Thyroid gland (tissue), 4 donors: ENCODE measurements at regions of chr13 and their contacts with region 1.

Region 1: DNA sequence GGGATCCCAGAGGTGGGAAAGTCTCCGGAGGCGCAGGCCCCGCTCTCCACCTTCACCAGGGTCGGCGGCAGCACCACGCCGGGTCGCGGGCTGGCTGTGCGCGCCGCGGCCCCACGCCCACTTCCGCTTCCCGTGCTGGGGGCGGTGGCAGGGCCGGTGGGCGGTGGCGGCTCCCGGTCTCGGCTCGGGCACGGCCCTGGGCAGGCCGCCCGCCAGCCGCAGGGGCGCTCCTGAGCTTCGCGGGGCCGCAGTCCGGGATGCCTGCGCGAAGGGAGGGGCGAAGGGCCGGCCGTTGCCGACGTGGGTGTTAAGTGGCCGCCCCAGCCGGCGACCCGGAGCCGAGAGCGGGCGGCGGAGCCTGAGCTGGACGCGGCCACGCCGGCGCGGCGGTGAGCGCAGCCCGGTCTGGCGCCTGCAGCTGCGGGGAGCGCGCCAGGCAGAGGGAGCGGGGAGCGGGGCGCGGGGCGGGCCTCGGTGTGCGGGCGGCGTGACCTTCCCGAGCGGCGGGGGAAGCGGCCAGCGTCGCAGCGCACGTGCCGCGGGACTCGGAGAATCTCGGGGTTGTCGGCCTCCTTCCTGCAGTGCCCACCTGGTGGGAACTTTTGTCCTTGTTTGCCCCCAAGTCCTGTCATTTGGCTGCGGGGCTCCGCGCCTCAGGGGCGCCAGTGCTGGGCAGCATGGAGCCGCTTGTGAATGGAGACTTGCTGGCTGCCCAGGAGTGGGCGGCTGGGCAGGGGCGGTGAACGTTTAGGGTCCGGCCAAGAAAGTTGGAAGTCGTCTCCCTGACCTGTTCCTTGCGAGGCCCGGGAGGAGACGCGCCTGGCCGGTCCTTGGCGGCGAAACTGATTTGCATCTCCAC is at the start of gene SLC25A15:
- DNase-seq: peak; percentile 91 to 93
- H3K4me3 ChIP-seq: peak within 1 kb of the TSS; percentile 10 to 74 (median 46)
- H3K27ac ChIP-seq: peak within 1 kb of the TSS; percentile 81 to 93 (median 91)
- H3K4me1 ChIP-seq: peaks cover 35 to 39% of the 10 kb centered on the region in 2 donors
- H3K27me3 ChIP-seq: no peaks in the 10 kb centered on the region
- CTCF ChIP-seq: peak in 3 of 6 experiments; percentile 58 to 62 (median 59)
- POLR2A ChIP-seq: peak in 1 of 2 donors; percentile 92
- total RNA-seq, gene SLC25A15: 12.8 to 19.5 (median 13.6) TPM

Region 2: DNA sequence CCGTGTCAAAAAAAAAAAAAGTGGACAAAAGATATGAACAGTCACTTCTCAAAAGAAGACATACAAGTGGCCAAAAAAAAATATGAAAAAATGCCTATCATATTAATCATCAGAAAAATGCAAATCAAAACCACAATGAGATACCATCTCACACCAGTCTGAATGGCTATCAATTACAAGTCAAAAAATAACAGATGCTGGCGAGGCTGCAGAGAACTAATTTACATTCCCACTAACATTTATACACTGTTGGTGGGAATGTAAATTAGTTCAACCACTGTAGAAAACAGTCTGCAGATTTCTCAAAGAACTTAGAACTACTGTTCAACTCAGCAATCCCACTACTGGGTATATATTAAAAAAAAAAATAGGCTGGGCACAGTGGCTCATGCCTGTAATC is 96.6 kb before region 1 on chr13:
- intact Hi-C with region 1: no loop called
- DNase-seq: no peak
- H3K4me3 ChIP-seq: no peak overlapping the region
- H3K27ac ChIP-seq: no peak overlapping the region
- H3K4me1 ChIP-seq: peaks cover 0 to 2% of the 10 kb centered on the region in 2 donors
- H3K27me3 ChIP-seq: no peaks in the 10 kb centered on the region
- CTCF ChIP-seq: no peak
- POLR2A ChIP-seq: no peak

Region 3: DNA sequence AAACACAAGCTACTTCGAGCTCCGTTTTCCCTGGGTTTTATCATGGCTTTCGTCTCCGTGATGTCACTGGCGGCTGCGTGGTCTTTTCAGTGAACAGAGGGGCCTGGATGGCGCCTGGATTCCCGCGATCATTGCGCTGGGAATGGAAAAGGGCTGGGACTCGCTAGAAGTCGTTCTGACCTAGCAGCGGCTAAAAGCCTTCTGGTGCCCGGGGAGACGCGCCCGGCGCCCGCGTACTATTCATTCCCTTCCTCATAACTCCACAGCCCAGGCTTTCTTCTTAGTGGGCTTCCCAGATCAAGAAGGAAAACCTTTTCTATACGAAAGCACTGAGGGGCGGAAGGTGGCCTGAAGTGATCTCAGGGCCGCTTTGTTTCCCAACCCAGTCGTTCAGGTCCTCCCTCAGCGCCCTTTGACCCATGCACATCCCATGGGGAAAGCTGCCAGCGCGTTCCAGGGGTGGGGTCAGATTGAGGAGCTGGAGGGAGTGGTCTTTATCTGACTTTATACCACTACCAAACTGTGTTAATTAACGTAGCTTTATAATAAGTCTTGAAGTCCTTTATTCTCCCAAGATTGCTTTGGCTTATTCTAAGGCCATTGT is 133.0 kb after region 1 on chr13:
- intact Hi-C with region 1: loop called (anchors 10 kb)
- DNase-seq: no peak
- H3K4me3 ChIP-seq: no peak overlapping the region
- H3K27ac ChIP-seq: no peak overlapping the region
- H3K4me1 ChIP-seq: peaks cover 11 to 20% of the 10 kb centered on the region in 2 donors
- H3K27me3 ChIP-seq: no peaks in the 10 kb centered on the region
- CTCF ChIP-seq: no peak
- POLR2A ChIP-seq: no peak